Prostate gland (tissue), 2 donors: ENCODE measurements at regions of chr3 and their contacts with region 1.

Region 1: DNA sequence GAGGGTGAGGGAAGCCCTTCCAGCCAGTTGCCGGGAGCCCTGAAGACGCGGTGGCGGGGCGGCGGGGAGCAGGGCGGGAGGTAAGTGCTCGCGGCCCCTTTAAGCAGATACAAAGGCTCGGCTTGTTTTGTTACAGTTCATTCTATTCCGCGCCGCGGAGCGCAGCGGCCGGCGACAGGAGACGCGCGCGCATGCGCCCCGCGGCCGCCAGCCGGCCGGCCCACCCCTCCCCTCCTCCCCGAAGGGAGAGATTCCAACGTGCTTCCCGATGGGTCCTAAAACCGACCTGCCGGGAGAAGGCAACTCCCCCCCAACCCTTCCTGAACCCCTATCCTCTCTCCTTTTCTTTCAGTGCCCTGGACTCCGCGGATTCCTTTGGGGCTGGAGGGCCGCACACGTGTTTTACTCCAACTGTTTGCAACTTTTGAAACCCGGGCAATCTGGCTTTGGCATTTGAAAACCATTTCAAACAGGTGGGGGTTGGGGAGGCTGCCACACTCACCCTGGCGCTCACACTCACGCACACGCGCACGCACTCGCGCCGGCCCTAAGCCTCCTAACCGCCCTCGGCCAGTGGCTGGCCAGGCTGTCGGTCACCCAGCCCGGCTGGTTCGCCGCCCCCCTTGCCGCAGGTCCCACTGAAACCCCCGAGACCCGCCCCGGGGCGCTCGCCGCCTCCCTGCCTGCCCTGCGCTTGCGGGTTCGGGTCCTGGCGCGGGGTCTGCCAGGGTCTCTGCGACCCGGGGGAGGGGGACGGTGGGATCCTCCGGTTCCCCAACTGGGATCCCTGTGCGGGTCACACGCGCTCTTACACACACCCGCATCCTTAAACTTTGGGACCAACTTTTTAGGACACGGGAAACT is at the start of gene MAGI1:
- DNase-seq: peak; percentile 88
- H3K4me3 ChIP-seq: peak within 1 kb of the TSS; percentile 66 to 75
- H3K27ac ChIP-seq: peak within 1 kb of the TSS; percentile 88
- H3K4me1 ChIP-seq: no peaks in the 10 kb centered on the region
- H3K27me3 ChIP-seq: no peaks in the 10 kb centered on the region
- CTCF ChIP-seq: peak in 2 of 4 experiments; percentile 18 to 46
- POLR2A ChIP-seq: peak; percentile 79
- total RNA-seq, gene MAGI1: 37.5 to 51.6 TPM

Region 2: DNA sequence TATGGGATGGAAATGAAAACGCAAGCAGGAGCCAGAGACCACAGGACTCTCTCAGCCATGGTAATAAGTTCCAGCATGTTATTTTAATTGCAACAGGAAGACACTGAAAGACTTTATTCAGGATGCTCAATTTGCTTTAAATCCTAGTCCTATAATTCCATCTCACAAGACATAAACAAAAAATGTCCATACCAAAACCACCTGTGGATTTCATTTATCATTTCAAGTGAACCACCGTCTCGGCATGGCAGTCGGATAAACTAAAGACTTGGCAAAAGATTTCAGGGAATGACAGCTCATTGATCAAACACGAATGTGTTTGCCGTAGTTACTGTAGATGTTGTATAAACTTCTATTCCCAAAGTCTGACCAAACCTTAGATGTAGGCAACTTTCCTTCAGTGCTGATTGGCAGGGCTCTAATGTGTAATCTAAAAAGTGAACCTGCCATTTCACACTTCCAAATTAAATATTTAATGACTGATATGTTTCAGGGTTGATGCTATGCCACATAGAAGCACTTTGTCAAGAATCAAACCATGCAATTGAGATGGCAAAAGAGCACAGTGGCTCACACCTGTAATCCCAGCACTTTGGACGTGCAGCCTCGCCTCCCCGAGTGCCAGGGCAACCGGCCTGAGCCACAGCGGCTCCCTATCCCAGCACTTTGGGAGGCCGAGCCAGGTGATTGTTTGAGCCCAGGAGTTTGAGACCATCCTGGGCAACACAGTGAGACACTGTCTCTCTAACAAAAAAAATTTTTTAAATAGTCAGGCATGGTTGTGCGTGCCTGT is 332.0 kb before region 1 on chr3:
- intact Hi-C with region 1: no loop called
- DNase-seq: no peak
- H3K4me3 ChIP-seq: no peak overlapping the region
- H3K27ac ChIP-seq: no peak overlapping the region
- H3K4me1 ChIP-seq: no peaks in the 10 kb centered on the region
- H3K27me3 ChIP-seq: no peaks in the 10 kb centered on the region
- CTCF ChIP-seq: no peak
- POLR2A ChIP-seq: no peak

Region 3: GRCh38 chr3:65785065-65785645 is 253.8 kb before region 1 on chr3:
- intact Hi-C with region 1: loop called (anchors 10 kb)
- DNase-seq: peak; percentile 27
- H3K4me3 ChIP-seq: no peak overlapping the region
- H3K27ac ChIP-seq: no peak overlapping the region
- H3K4me1 ChIP-seq: peaks cover 5% of the 10 kb centered on the region
- H3K27me3 ChIP-seq: no peaks in the 10 kb centered on the region
- CTCF ChIP-seq: peak; percentile 57 to 86 (median 68)
- POLR2A ChIP-seq: no peak

Region 4: GRCh38 chr3:65996589-65996988 is 42.4 kb before region 1 on chr3:
- intact Hi-C with region 1: no loop called
- DNase-seq: peak; percentile 13
- H3K4me3 ChIP-seq: no peak overlapping the region
- H3K27ac ChIP-seq: no peak overlapping the region
- H3K4me1 ChIP-seq: peaks cover 4% of the 10 kb centered on the region
- H3K27me3 ChIP-seq: no peaks in the 10 kb centered on the region
- CTCF ChIP-seq: no peak
- POLR2A ChIP-seq: no peak

Region 5: GRCh38 chr3:66153481-66154443 is 114.8 kb after region 1 on chr3:
- intact Hi-C with region 1: loop called (anchors 10 kb)
- DNase-seq: no peak
- H3K4me3 ChIP-seq: peak overlapping the region; percentile 11 to 12
- H3K27ac ChIP-seq: no peak overlapping the region
- H3K4me1 ChIP-seq: no peaks in the 10 kb centered on the region
- H3K27me3 ChIP-seq: no peaks in the 10 kb centered on the region
- CTCF ChIP-seq: no peak
- POLR2A ChIP-seq: no peak